ENCODE measurements at regions of chr14 and their contacts with region 1.

Region 1: DNA sequence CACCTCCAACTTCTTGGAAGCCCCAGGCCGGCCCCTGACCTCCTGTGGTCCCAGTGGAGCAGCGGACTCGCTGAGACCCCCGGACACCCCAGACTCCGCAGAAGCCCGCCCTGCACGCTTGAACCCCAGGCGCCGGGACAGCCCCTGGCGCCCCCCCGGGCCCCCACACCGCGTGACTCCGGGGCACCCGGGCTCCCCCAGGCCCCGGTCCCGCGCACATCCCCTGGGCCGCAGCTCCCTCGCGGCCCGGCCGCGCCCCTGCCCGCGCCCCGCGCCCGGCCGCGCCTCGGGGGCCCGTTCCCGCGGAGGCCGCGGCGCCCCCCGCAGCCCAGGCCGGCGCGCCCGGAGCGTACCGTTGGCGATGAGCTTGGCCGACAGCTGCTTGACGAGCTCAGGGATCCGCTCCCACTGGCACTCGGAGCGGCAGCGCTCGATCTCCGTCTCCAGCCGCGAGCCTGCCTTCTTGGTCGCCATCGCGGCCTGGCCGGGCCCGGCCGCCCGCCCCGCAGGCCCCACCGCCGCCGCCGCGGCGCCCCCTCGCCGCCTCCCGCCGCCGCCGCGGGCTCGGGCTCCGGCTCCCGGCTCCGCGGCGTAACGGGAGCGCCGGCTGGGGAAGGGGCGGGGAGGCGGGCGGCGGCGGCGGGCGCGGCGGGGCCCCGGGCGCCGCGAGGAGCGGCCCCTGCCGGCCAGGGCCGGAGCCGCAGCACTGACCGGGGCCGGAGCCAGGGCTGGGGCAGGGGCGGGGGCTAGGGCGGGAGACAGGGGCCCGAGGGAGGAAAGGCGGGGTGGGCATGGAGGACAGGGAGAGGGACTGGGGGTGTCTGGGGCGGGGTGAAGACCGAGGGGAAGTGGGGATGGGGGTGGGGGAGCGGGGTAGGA is at the start of gene TTC7B:
- DNase-seq: no peak
- H3K4me3 ChIP-seq: peak within 1 kb of the TSS; percentile 73
- CTCF ChIP-seq: peak; percentile 42

Region 2: DNA sequence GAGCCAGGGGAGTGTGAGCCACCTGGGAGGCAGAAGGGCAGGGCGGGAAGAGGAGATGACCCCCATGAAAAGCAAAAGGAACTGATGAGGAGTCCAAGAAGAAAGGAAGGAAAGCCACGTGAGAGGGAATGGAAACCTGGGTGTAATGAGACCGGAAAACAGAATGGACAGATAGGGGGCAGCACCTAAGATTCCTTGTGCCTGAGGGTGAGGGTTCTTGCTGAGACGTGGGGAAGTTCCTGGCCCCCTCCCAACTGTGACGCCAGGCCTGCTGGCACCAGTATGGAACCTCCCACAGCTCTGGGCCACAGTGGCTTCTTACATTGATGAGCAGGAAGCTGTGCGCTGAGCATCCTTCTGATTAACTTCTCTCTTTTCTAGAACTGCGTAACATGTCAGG is 30.6 kb before region 1 on chr14:
- CTCF ChIA-PET with region 1: interaction called, 13 read pairs
- POLR2A ChIA-PET with region 1: no interaction called
- DNase-seq: no peak
- H3K4me3 ChIP-seq: no peak overlapping the region
- CTCF ChIP-seq: no peak

Region 3: DNA sequence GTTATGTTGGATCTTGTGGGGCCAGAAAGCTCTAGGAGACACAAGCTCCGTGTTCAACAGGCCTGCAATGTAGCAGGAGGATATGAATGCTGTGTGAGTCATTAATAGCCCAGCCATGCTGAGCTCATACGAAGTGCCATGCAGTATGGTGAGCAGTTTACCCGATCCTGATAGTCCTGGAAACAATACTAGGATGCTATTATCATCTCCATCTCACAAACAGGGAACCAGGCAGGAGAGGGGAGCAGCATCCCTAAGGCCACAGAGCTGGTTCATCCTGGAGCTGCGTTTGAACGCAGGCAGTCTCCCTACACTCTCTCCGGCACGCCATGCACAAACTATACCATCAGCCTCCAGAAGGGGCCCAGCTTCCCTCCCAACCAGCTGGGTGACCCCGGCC is 20.3 kb before region 1 on chr14:
- CTCF ChIA-PET with region 1: interaction called, 16 read pairs
- POLR2A ChIA-PET with region 1: no interaction called
- DNase-seq: peak; percentile 67
- H3K4me3 ChIP-seq: no peak overlapping the region
- CTCF ChIP-seq: no peak

Region 4: GRCh38 chr14:90805662-90806540 is 10.2 kb before region 1 on chr14:
- CTCF ChIA-PET with region 1: interaction called, 15 read pairs
- POLR2A ChIA-PET with region 1: no interaction called
- DNase-seq: no peak
- H3K4me3 ChIP-seq: no peak overlapping the region
- CTCF ChIP-seq: no peak

Region 5: DNA sequence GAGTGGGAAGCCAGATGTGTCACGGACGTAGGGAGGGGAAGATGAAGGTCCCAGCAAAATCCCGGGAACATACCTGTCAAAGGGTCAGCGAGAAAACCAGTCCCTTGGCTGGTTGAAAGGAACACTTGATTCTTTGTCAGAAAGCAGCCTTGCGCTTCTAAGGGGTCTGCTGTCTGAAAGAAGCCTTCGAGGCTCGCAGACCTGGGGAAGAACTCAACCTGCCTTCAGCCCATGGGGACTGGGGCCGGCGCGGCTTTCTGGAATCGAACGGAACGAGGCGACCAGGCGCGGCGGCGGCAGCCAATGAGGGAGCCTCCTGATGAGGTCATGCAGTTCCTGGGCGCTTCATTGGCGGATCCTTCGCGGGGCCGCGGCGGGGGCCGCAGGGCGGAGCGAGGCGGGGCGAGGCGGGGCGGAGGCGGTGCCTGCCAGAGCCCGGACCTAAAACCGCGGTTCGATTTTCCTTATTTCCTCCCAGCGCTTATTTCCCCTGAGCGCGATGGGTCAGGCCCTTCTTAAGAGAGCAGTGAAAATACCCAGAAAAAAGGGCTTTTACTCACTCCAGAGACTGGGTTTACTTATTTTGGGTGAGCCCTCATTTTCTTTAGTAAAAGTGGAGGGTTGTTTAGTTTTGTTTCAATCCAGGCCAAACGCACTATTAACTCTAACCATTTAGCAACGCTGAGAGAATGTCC is 12.0 kb after region 1 on chr14:
- CTCF ChIA-PET with region 1: interaction called, 18 read pairs
- POLR2A ChIA-PET with region 1: no interaction called
- DNase-seq: no peak
- H3K4me3 ChIP-seq: peak overlapping the region; percentile 56
- CTCF ChIP-seq: no peak

Region 6: GRCh38 chr14:90905531-90905930 is 89.5 kb after region 1 on chr14:
- CTCF ChIA-PET with region 1: no interaction called
- POLR2A ChIA-PET with region 1: no interaction called
- DNase-seq: no peak
- H3K4me3 ChIP-seq: no peak overlapping the region
- CTCF ChIP-seq: no peak

Region 7: GRCh38 chr14:91164685-91165084 is 348.6 kb after region 1 on chr14:
- CTCF ChIA-PET with region 1: no interaction called
- POLR2A ChIA-PET with region 1: no interaction called
- DNase-seq: no peak
- H3K4me3 ChIP-seq: no peak overlapping the region
- CTCF ChIP-seq: no peak